ENCODE measurements at regions of chr2 and their contacts with region 1.

Region 1: DNA sequence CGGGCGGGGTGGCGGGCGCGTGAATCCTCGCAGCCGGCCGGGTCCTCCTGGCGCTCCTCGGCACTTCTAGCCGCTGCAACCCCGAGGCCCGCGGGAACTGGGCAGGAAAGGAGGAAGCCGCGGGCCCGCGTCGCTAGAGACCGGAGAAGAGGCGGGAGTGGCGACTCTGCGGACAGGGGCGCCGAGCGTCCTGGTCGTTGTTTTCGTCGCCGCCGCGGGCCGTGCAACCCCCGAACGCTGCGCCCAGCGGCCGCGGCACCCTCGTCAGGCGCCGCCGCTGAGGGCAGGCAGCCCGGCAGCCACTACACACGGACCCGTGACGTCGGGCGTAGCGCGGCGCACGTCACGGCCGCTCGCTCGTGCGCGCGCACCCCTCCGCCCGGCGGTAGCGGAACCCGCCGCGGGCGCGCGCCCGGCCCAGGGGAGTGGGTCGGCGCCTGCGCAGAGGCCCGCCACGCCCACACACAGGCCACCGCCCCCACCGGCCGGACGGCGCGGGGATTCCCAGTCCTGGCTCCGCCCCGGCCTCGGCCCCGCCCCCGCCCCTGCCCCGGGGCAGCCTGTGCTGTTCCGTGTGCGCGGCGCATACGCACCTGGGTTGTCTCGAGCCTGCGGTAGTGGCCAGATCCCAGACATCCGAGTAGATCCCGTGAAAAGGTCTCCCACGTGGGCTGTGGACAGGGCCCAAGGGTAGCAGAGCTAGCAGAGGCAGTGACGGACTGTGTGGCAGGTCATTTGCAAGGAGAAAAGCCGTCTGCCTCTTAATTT is at the start of gene MAP3K2:
- DNase-seq: peak; percentile 95
- H3K4me3 Mint-ChIP-seq: peak within 1 kb of the TSS; percentile 78
- H3K27ac Mint-ChIP-seq: peak within 1 kb of the TSS; percentile 83
- H3K4me1 Mint-ChIP-seq: peaks cover 57% of the 10 kb centered on the region
- H3K27me3 Mint-ChIP-seq: no peaks in the 10 kb centered on the region
- total RNA-seq, gene MAP3K2: 56.2 to 59.6 TPM

Region 2: GRCh38 chr2:127371037-127371436 is 16.8 kb before region 1 on chr2:
- CTCF ChIA-PET with region 1: no interaction called
- POLR2A ChIA-PET with region 1: no interaction called
- DNase-seq: no peak
- H3K4me3 Mint-ChIP-seq: no peak overlapping the region
- H3K27ac Mint-ChIP-seq: no peak overlapping the region
- H3K4me1 Mint-ChIP-seq: no peaks in the 10 kb centered on the region
- H3K27me3 Mint-ChIP-seq: no peaks in the 10 kb centered on the region

Region 3: DNA sequence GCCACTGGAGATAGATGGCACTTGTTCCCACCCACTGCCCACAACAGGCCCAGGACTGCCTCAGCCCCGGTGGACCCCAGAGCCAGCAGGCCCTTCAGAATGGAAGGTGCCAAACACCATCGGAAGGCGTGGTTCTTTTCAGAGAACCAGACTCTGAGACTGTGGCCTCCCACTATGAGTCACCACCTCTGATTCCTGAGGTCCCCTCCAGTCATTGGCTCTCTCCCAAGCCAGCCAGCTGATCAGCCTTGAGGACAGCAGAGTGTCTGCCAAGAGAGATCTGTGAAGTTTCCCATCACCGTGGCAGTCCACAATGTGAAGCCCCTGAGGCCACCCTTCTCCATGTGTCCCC is 10.4 kb after region 1 on chr2:
- CTCF ChIA-PET with region 1: interaction called, 3 read pairs
- POLR2A ChIA-PET with region 1: interaction called, 11 read pairs
- DNase-seq: peak; percentile 72
- H3K4me3 Mint-ChIP-seq: no peak overlapping the region
- H3K27ac Mint-ChIP-seq: peak overlapping the region; percentile 52
- H3K4me1 Mint-ChIP-seq: peaks cover 35% of the 10 kb centered on the region
- H3K27me3 Mint-ChIP-seq: peaks cover 6% of the 10 kb centered on the region

Region 4: DNA sequence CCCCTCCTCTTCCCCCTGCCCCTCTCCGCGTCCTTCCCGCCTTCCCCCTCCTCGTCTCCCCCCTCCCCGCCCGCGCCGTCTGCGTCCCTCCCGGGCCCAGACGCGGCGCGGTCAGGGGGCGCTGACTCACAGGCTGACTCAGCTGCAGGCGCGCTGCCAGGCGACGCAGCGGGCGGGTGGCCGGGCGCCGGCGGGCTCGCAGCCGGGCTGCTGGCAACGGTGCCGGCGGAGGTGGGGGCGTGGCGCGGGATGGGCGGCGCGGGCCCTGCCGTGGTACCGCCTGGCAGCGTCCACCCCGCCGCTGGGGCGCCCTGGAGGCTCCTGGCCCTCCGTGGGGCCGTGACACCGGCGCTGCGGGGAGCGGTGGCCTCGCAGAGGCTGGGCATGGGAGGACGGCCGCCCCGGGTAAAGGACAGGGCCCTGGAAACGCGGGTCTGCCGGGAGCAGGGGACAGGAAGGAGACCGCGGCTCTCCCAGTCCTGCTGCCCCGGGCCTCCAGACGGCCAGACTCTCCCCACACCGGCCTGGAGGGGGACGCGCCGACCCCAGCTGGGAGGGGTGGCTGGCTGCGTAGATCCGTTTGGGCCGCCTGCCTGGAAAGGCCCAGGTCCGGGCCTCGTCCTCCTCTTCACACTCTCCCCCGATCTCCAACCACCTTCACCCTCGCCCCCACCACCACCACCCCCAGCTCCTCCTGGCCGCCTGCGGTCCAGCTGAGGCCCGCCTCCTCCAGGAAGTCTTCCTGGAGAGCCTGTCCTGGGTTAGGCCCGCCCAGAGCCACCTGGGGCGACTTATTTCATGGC is 20.4 kb after region 1 on chr2:
- CTCF ChIA-PET with region 1: interaction called, 3 read pairs
- POLR2A ChIA-PET with region 1: interaction called, 27 read pairs
- DNase-seq: peak; percentile 89
- H3K4me3 Mint-ChIP-seq: peak overlapping the region; percentile 58
- H3K27ac Mint-ChIP-seq: peak overlapping the region; percentile 11
- H3K4me1 Mint-ChIP-seq: peaks cover 31% of the 10 kb centered on the region
- H3K27me3 Mint-ChIP-seq: peaks cover 13% of the 10 kb centered on the region

Region 5: DNA sequence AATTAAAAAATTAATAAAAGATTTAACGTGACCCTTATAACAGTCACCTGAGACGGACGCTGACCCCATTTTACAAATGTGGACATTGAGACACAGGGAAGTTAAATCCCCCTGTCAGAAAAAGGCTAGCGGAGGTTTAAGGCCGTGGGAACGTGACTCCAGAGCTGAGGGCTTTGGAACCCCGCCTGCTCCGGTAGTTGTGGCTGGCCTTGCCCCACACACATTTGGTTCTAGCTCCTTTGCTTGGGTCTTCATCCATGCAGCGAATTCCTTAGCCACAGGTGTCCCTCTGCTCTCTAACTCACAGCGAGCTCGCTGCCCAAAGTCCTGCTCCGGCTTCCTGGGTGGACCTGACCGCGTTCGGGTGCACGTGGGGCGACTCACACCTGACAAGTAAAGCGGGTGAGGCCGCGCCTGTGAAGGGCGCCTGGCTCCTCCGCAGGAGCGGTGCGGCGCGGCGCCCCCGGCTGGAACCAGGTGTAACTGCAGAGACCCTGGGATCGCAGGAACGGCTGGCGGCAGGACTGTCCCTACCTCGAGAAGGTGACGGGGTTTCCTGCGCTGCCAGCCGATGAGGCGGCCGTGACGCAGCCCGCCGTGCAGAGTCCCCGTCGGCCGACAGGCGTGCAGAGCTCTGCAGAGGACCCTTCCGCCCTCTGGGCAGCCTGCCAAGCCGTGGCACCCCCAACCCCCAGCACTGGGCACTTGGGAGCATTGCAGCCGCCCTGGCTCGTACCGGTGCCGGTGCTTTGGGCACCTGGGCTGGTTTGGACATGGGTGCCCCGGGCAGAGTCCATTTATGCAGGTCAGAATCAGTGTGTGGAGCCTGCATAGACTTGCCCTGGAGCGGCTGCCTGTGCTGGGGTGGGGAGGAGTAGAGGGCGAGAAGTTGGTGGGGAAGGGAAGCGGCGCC is 28.0 kb after region 1 on chr2:
- CTCF ChIA-PET with region 1: interaction called, 4 read pairs
- POLR2A ChIA-PET with region 1: interaction called, 27 read pairs
- DNase-seq: peak; percentile 79
- H3K4me3 Mint-ChIP-seq: peak overlapping the region; percentile 59
- H3K27ac Mint-ChIP-seq: no peak overlapping the region
- H3K4me1 Mint-ChIP-seq: peaks cover 34% of the 10 kb centered on the region
- H3K27me3 Mint-ChIP-seq: peaks cover 35% of the 10 kb centered on the region

Measured in activated CD4-positive, alpha-beta memory T cell treated with anti-CD3 and anti-CD28 coated beads, Interleukin-2, amount 10 ng/mL, durations not matched to agents 7 days and 5 days (primary cell).